Dorsolateral prefrontal cortex (tissue), 120 donors: ENCODE measurements at regions of chr5 and their contacts with region 1.

Region 1: DNA sequence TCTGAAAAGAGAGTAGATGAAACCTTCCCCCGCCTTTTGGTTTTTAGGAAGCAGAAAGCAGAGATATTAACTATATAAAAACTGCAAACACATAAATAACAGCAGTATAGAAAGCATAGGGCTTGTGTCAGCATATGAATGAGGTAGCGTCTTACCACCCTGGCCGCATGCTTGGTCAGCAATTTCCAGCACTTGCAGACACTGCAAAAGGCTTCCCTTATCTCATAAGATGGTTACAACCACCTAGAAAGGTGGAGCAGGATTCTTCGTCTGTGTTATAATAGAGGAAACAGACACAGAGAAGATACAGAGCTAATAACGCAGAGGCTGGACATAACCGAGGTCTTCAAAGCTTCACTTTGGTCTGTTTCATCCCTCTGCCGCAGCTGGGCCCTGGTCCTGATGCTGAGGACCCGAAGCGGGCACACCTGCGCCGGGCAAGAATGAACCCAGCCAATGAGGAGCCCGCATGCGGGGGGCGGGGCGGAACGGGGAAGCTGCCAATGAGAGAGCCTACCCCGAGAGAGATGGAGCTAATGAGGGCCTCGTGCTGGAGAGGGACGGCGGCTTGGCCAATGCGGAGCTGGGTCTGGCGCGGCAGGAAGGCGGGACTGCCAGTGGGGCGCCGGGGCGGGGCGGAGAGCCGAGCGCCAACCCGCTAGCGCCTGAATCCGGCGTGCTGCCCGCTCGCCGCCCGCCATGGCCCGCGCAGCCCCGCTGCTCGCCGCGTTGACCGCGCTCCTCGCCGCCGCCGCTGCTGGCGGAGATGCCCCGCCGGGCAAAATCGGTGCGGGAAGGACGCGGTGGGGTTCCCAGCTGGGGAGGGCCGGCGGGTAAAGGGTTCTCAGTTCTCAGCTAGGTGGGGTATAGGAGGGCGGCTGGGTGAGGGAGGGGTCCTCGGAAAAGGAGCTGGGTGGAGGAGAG is at the start of gene PCYOX1L:
- DNase-seq: peak; percentile 95 to 99 (median 98)
- H3K4me3 ChIP-seq: peak within 1 kb of the TSS; percentile 45 to 97 (median 87)
- H3K27ac ChIP-seq: peak within 1 kb of the TSS in 58 of 59 donors; percentile 0 to 93 (median 84)
- H3K27me3 ChIP-seq: no peaks in the 10 kb centered on the region
- CTCF ChIP-seq: peak in 21 of 56 donors; percentile 14 to 55 (median 29)
- total RNA-seq, gene PCYOX1L: 7.2 to 29.4 (median 19.2) TPM

Region 2: GRCh38 chr5:149284501-149284900 is 73.1 kb before region 1 on chr5:
- intact Hi-C with region 1: no loop called
- DNase-seq: no peak
- H3K4me3 ChIP-seq: no peak overlapping the region
- H3K27ac ChIP-seq: peak overlapping the region in 2 of 59 donors; percentile 19 to 51
- H3K27me3 ChIP-seq: no peaks in the 10 kb centered on the region
- CTCF ChIP-seq: no peak

Region 3: DNA sequence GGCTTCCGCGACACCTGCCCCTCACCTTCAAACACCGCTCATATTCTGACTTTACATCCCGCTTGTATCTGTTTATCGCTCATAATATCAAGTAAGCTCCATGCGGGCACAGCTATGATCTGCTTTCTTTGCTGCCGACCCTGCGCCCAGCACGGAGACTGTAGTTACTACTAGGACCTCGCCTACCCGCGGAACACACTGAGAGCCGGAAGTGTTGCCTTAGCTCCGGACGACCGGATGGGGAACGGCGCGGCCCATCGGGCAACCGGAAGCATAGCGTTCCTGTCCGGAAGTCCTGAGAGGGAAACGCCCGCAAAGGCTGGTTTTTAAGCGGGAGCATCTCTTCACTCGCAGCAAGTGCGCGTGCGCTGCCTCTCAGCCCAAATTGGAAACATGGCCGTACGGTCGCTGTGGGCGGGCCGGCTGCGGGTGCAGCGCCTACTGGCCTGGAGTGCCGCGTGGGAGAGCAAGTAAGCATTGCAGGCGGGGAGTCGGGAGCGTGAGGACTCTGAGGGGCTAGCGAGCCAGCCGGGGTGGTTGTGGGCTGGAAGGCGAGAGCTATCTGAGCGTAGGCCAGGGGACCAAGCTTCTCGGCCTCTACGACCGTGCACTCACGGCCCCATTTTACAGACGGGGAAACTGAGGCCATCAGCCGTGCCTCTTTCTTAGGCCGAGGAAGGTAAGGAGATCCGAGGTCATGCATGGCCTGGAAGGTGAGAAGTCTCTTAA is 12.3 kb before region 1 on chr5 and contains the start of gene GRPEL2:
- intact Hi-C with region 1: loop called (anchors 1 kb)
- DNase-seq: peak; percentile 92 to 97 (median 96)
- H3K4me3 ChIP-seq: peak within 1 kb of the TSS; percentile 64 to 98 (median 89)
- H3K27ac ChIP-seq: peak within 1 kb of the TSS; percentile 6 to 94 (median 84)
- H3K27me3 ChIP-seq: peaks cover 0 to 16% (median 0%) of the 10 kb centered on the region in 45 donors
- CTCF ChIP-seq: peak in 41 of 56 donors; percentile 2 to 61 (median 33)
- total RNA-seq, gene GRPEL2: 9.0 to 25.3 (median 17.3) TPM

Region 4: GRCh38 chr5:149563466-149563865 is 205.8 kb after region 1 on chr5:
- intact Hi-C with region 1: no loop called
- DNase-seq: no peak
- H3K4me3 ChIP-seq: no peak overlapping the region
- H3K27ac ChIP-seq: peak overlapping the region in 18 of 59 donors; percentile 4 to 78 (median 30)
- H3K27me3 ChIP-seq: no peaks in the 10 kb centered on the region
- CTCF ChIP-seq: no peak

Region 5: GRCh38 chr5:149636851-149637246 is 279.2 kb after region 1 on chr5:
- intact Hi-C with region 1: no loop called
- DNase-seq: peak in 8 of 10 donors; percentile 35 to 95 (median 84)
- H3K4me3 ChIP-seq: no peak overlapping the region
- H3K27ac ChIP-seq: peak overlapping the region in 1 of 59 donors; percentile 12
- H3K27me3 ChIP-seq: no peaks in the 10 kb centered on the region
- CTCF ChIP-seq: peak; percentile 62 to 96 (median 84)